ENCODE measurements at regions of chr1 and their contacts with region 1.

Region 1: GRCh38 chr1:182143154-182143657 is 81.7 kb upstream of the ZNF648 start:
- DNase-seq: peak; percentile 87

Region 2: DNA sequence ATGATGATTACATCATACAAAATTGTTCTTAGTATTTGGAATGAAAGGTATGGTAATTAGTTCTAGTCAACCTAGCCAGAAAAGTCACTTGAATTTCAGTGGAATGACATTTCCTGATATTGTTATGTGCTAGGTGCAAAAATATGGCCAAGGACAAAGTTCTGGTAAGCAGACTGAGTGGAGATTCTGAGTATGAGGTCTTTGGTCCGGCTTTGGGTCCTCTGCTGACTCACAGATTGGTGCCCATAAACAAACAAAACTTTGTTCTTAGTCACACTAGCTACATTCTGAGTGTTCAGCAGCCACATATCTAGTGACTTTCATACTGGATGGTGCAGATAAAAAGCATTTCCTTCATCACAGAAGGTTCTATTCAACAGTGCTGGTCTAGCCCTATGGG is 287.8 kb before region 1 on chr1:
- CTCF ChIA-PET with region 1: no interaction called
- POLR2A ChIA-PET with region 1: no interaction called
- DNase-seq: no peak

Region 3: GRCh38 chr1:182087861-182088341 is 55.3 kb before region 1 on chr1:
- CTCF ChIA-PET with region 1: no interaction called
- POLR2A ChIA-PET with region 1: no interaction called
- DNase-seq: no peak

Region 4: DNA sequence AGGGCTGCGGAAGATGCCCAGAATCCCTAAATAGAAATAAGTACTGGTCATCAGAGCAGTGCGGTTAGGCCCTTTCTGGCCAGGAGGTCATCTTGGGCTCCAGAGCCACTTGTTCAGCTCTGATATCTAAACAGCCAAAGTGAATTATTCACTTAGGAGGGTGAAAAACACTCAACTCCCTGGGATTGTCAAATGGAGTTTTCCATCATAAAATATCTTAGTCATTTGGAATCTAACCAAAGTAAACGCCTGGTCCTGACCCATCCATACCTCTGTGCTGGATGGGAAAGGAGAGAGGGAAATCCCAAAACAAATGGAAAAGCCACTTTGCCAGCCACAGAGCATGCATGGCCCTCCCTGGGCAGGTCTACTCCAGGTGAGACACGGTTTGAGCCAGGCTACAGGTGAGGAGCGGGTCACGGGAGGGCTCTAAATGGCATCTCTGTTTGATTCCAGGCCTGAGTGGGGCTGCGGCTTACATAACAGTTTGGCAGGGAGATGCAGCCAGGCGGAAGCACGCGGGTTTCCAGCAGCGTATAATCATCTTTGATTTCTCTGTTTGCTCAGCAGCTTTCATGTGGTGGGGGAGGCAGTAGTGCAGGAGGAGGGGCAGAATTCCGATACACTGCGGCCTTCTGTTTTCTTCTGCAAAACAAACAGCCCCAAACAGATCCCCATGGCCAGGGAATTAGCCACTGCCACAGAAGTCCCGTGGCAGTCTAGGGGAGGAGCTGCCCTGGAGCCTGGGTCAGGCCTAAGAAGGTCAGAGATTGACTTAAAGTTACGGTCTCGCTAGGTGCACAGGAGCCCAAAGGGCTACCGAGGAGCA is 22.6 kb before region 1 on chr1:
- CTCF ChIA-PET with region 1: no interaction called
- POLR2A ChIA-PET with region 1: no interaction called
- DNase-seq: peak; percentile 33

Region 5: DNA sequence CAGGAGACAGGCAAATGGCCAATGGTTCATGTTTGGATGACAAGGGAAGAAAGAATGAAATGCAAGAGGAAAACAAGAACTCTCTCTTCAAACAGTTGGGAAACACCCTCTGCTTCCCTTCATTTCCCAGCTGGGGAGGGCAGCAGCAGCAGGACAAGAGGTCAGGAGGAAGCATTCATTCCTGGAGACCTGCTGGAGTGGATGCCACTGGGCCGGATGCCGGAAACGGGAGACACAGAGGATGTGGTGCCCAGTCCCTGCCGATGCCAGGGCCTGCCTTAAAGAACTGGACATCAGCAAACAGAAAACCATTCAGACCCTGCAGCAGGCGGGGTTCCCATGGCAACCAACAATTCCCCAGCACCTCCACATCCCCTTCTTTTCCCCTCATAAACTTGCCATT is 20.6 kb after region 1 on chr1:
- CTCF ChIA-PET with region 1: no interaction called
- POLR2A ChIA-PET with region 1: no interaction called
- DNase-seq: no peak

Region 6: DNA sequence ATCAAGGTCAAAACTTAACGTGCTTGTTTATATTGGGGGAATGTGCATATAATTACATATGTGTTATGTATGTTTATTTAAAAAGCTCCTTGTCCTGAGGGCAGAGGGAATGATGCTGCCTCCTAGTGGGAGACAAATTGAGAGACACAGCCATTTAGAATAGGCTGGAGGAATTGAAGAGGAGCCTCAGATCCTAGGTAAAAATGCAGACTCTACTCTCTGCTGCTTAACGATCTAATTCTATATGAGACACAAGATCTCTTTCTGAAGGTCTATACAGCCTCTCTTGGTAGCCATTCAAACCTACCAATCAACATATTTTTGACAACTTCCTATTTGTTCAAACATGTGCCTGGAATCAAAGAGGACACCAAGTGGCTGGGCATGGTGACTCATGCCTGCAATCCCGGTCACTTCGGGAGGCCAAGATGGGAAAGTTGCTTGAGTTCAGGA is 54.9 kb after region 1 on chr1:
- CTCF ChIA-PET with region 1: interaction called, 13 read pairs
- POLR2A ChIA-PET with region 1: interaction called, 3 read pairs
- DNase-seq: peak; percentile 26

Region 7: GRCh38 chr1:182391362-182392044 is 248.3 kb after region 1 on chr1 and contains the start of gene GLUL:
- CTCF ChIA-PET with region 1: interaction called, 29 read pairs
- POLR2A ChIA-PET with region 1: interaction called, 13 read pairs
- DNase-seq: peak; percentile 96